CD4-positive, alpha-beta memory T cell (primary cell): ENCODE measurements at regions of chr19 and their contacts with region 1.

Region 1: DNA sequence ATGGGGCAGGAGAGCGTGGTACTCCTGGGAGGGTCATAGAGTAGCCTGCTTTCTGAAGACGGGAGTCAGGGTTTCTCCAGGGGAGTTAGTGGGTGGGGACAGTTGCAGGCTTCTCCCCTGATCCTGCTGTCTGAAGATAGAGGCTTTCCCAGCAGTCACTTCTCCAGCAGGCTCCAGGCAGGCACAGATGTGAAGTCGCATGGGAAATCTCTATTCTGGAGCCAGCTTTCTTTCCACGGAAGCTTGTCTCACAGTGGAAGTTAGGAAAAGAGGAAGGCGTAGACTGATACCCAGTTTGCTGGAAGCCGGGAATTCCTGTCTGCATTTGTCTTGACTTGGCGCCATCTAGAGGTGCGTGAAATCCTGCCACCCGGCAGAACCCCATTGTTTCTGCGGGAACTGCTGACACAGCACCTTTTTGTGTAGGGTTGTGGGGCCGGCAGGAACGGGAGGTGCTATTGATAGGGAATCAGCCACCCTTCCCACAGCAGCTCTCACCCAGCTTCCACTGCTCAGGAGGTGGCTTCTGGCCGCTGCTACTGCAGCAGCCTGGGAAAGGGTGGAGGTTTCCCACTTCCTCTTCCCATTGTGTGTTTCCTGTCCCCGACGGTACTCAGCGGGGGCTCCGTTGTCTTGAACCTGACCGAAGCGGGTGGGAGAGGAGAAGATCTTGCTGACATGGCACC is 28.5 kb upstream of the NPAS1 start:
- DNase-seq: peak; percentile 45 to 64 (median 51)
- H3K4me3 ChIP-seq: no peak overlapping the region
- H3K4me3 Mint-ChIP-seq: peak overlapping the region in 3 of 8 donors; percentile 2 to 46 (median 34)
- H3K27ac ChIP-seq: no peak overlapping the region
- H3K27ac Mint-ChIP-seq: peak overlapping the region in 5 of 7 donors; percentile 42 to 59 (median 48)
- H3K4me1 ChIP-seq: peaks cover 14% of the 10 kb centered on the region
- H3K4me1 Mint-ChIP-seq: peaks cover 12 to 20% (median 14%) of the 10 kb centered on the region in 4 donors
- H3K27me3 ChIP-seq: no peaks in the 10 kb centered on the region
- H3K27me3 Mint-ChIP-seq: no peaks in the 10 kb centered on the region

Region 2: DNA sequence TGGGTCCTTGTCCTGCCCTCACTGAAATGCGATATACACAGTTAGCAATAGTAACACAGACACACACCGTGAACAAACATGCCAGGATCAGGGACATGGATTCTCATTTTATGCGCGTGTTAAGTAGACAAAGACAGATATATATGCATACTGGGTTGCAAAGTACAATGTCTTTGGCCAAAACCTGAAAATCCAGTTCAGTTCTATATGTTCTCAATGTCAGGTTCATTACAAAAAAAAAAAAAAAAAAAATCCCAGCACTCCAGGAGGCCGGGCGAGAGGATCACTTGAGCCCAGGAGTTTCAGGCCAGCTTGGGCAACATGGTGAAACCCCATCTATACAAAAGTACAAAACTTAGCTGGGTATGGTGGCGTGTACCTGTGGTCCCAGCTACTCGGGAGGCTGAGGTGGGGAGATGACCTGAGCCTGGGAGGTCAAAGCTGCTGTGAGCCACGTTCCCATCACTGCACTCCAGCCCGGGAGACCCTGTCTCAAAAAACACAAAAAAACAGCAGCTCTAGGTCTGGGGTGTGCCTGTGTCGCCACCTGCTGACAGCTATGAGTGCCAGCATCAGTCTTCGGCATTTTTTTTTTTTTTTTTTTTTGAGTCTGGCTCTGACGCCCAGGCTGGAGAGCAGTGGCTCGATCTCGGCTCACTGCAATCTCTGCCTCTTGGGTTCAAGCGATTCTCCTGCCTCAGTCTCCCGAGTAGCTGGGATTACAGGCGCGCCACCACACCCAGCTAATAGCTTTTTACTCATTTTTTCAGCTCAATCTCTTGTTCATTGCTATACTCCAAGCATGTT is 150.8 kb before region 1 on chr19:
- CTCF ChIA-PET with region 1: interaction called, 15 read pairs
- POLR2A ChIA-PET with region 1: no interaction called
- intact Hi-C with region 1: no loop called
- DNase-seq: peak; percentile 57 to 63 (median 60)
- H3K4me3 ChIP-seq: no peak overlapping the region
- H3K4me3 Mint-ChIP-seq: no peak overlapping the region
- H3K27ac ChIP-seq: no peak overlapping the region
- H3K27ac Mint-ChIP-seq: peak overlapping the region in 6 of 7 donors; percentile 32 to 56 (median 50)
- H3K4me1 ChIP-seq: peaks cover 3% of the 10 kb centered on the region
- H3K4me1 Mint-ChIP-seq: peaks cover 0 to 4% (median 3%) of the 10 kb centered on the region in 4 donors
- H3K27me3 ChIP-seq: no peaks in the 10 kb centered on the region
- H3K27me3 Mint-ChIP-seq: no peaks in the 10 kb centered on the region

Region 3: DNA sequence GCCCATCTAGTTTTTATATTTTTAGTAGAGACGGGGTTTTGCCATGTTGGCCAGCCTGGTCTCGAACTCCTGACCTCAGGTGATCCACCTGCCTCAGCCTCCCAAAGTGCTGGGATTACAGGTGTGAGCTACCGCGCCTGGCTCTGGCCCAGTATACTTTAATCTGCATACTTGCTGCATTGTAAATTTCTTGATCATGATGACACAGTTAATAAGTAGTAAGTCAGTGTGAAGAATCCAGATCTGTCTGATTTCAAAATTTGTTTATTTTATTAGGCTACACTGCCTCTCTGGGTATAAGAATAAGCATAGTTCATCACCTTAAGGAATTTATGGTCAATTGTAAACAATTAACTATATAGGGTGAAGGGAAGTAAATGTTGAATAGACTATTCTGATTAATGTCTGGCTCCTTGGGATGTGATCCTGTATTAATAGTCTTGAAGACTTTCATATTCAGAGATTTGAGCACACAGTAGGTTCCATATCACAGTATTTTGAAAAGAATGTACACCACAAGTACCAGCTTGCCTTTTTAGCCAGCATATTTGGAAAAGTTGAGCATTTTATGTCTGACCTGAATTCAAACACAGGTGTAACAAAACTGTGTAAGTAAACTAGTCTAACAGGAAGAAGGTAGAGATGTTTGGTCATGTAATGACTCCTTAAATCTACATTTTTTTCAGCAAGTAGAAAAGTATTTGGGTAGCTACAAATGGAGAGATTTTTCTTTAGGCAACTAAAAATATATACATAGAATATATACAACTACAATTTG is 122.9 kb before region 1 on chr19:
- CTCF ChIA-PET with region 1: interaction called, 11 read pairs
- POLR2A ChIA-PET with region 1: interaction called, 20 read pairs
- intact Hi-C with region 1: no loop called
- DNase-seq: no peak
- H3K4me3 ChIP-seq: no peak overlapping the region
- H3K4me3 Mint-ChIP-seq: peak overlapping the region in 2 of 8 donors; percentile 2 to 17
- H3K27ac ChIP-seq: no peak overlapping the region
- H3K27ac Mint-ChIP-seq: peak overlapping the region in 5 of 7 donors; percentile 11 to 88 (median 35)
- H3K4me1 ChIP-seq: peaks cover 59% of the 10 kb centered on the region
- H3K4me1 Mint-ChIP-seq: peaks cover 6 to 47% (median 34%) of the 10 kb centered on the region in 4 donors
- H3K27me3 ChIP-seq: no peaks in the 10 kb centered on the region
- H3K27me3 Mint-ChIP-seq: no peaks in the 10 kb centered on the region

Region 4: DNA sequence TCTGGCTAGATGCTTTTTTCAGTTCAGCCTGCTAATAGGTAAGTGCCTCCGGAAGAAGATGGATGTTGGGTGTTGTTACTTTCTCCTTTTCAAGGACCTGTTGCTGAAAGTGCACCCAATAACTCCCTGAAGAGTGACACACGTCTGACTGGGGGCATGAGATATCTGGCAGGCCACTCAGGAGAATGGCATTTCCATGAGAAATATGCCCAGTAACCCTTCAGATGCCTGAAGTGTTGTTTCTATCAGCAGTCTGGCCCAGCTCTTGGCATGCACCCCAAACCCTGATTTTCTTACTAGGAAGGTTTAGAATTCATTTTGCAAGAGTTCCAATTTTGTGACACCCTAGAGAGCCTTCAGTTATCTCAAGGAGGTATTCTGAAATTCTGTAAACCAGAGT is 58.8 kb before region 1 on chr19:
- CTCF ChIA-PET with region 1: interaction called, 72 read pairs
- POLR2A ChIA-PET with region 1: no interaction called
- intact Hi-C with region 1: loop called (anchors 2 kb)
- DNase-seq: no peak
- H3K4me3 ChIP-seq: no peak overlapping the region
- H3K4me3 Mint-ChIP-seq: no peak overlapping the region
- H3K27ac ChIP-seq: no peak overlapping the region
- H3K27ac Mint-ChIP-seq: peak overlapping the region; percentile 23 to 92 (median 84)
- H3K4me1 ChIP-seq: peaks cover 81% of the 10 kb centered on the region
- H3K4me1 Mint-ChIP-seq: peaks cover 60 to 88% (median 76%) of the 10 kb centered on the region in 4 donors
- H3K27me3 ChIP-seq: no peaks in the 10 kb centered on the region
- H3K27me3 Mint-ChIP-seq: no peaks in the 10 kb centered on the region

Region 5: GRCh38 chr19:46954993-46955812 is 35.9 kb before region 1 on chr19:
- CTCF ChIA-PET with region 1: interaction called, 50 read pairs
- POLR2A ChIA-PET with region 1: interaction called, 13 read pairs
- intact Hi-C with region 1: loop called (anchors 2 kb)
- DNase-seq: peak; percentile 68 to 79 (median 74)
- H3K4me3 ChIP-seq: peak overlapping the region; percentile 51 to 62
- H3K4me3 Mint-ChIP-seq: peak overlapping the region; percentile 75 to 92 (median 88)
- H3K27ac ChIP-seq: peak overlapping the region; percentile 53
- H3K27ac Mint-ChIP-seq: peak overlapping the region; percentile 91 to 96 (median 94)
- H3K4me1 ChIP-seq: peaks cover 93% of the 10 kb centered on the region
- H3K4me1 Mint-ChIP-seq: peaks cover 65 to 86% (median 74%) of the 10 kb centered on the region in 4 donors
- H3K27me3 ChIP-seq: no peaks in the 10 kb centered on the region
- H3K27me3 Mint-ChIP-seq: no peaks in the 10 kb centered on the region

Region 6: DNA sequence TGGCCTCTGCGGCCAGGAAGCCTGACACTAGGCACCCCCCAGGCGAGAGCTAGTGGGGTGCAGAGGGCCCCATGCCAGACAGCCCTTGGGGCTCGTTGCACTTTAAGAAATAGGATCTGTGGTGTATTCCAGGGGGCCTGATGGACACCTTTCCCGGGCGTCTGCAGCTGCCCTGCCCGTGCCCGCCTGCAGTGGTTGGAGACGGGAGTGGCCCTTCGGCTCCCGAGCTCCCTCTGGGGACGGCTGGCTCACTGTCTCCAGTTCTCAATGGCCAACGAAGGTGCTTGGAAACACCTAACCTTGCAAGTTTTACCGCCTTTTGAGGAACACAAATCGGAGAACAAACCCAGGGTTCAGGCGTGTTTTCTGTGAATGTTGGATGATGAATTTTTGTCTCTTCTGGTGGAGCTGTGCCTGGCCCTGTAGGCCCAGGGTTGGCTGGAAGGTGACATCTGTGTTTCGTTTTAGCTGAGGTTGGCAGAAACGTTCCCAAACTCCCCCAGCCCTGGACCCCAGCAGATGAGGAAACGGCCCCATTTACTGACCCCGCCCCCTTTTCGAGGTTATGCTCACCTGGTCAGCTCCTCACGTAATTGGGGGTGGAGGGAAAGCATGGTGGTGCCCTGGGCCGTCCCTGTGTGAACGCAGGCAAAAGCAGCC is 11.1 kb after region 1 on chr19:
- CTCF ChIA-PET with region 1: interaction called, 3 read pairs
- POLR2A ChIA-PET with region 1: interaction called, 10 read pairs
- intact Hi-C with region 1: no loop called
- DNase-seq: no peak
- H3K4me3 ChIP-seq: no peak overlapping the region
- H3K4me3 Mint-ChIP-seq: no peak overlapping the region
- H3K27ac ChIP-seq: no peak overlapping the region
- H3K27ac Mint-ChIP-seq: no peak overlapping the region
- H3K4me1 ChIP-seq: peaks cover 11% of the 10 kb centered on the region
- H3K4me1 Mint-ChIP-seq: peaks cover 11 to 19% (median 13%) of the 10 kb centered on the region in 4 donors
- H3K27me3 ChIP-seq: no peaks in the 10 kb centered on the region
- H3K27me3 Mint-ChIP-seq: no peaks in the 10 kb centered on the region